H1 (cell line): ENCODE measurements at regions of chr14 and their contacts with region 1.

Region 1: GRCh38 chr14:54572316-54572715 is 5.4 kb downstream of the SAMD4A start:
- DNase-seq: no peak
- H3K4me3 ChIP-seq: no peak overlapping the region
- H3K27ac ChIP-seq: no peak overlapping the region
- H3K4me1 ChIP-seq: peaks cover 2 to 8% (median 5%) of the 10 kb centered on the region in 4 experiments; a peak in 6 of 7 replicates
- H3K27me3 ChIP-seq: peaks cover 0 to 12% (median 5%) of the 10 kb centered on the region in 4 experiments; a peak in 4 of 7 replicates
- CTCF ChIP-seq: peak; percentile 20 to 94 (median 82)
- EP300 ChIP-seq: no peak
- POLR2A ChIP-seq: no peak
- RAD21 ChIP-seq: peak; percentile 97 to 98

Region 2: GRCh38 chr14:54424479-54424901 is 147.8 kb before region 1 on chr14:
- CTCF ChIA-PET with region 1: no interaction called
- POLR2A ChIA-PET with region 1: no interaction called
- DNase-seq: no peak
- H3K4me3 ChIP-seq: no peak overlapping the region
- H3K27ac ChIP-seq: no peak overlapping the region
- H3K4me1 ChIP-seq: no peaks in the 10 kb centered on the region
- H3K27me3 ChIP-seq: no peaks in the 10 kb centered on the region
- CTCF ChIP-seq: no peak
- EP300 ChIP-seq: no peak
- POLR2A ChIP-seq: no peak
- RAD21 ChIP-seq: no peak

Region 3: GRCh38 chr14:54584097-54584496 is 11.8 kb after region 1 on chr14:
- CTCF ChIA-PET with region 1: interaction called, 23 read pairs
- POLR2A ChIA-PET with region 1: interaction called, 4 read pairs
- DNase-seq: no peak
- H3K4me3 ChIP-seq: no peak overlapping the region
- H3K27ac ChIP-seq: no peak overlapping the region
- H3K4me1 ChIP-seq: no peaks in the 10 kb centered on the region
- H3K27me3 ChIP-seq: no peaks in the 10 kb centered on the region
- CTCF ChIP-seq: no peak
- EP300 ChIP-seq: no peak
- POLR2A ChIP-seq: no peak
- RAD21 ChIP-seq: no peak

Region 4: DNA sequence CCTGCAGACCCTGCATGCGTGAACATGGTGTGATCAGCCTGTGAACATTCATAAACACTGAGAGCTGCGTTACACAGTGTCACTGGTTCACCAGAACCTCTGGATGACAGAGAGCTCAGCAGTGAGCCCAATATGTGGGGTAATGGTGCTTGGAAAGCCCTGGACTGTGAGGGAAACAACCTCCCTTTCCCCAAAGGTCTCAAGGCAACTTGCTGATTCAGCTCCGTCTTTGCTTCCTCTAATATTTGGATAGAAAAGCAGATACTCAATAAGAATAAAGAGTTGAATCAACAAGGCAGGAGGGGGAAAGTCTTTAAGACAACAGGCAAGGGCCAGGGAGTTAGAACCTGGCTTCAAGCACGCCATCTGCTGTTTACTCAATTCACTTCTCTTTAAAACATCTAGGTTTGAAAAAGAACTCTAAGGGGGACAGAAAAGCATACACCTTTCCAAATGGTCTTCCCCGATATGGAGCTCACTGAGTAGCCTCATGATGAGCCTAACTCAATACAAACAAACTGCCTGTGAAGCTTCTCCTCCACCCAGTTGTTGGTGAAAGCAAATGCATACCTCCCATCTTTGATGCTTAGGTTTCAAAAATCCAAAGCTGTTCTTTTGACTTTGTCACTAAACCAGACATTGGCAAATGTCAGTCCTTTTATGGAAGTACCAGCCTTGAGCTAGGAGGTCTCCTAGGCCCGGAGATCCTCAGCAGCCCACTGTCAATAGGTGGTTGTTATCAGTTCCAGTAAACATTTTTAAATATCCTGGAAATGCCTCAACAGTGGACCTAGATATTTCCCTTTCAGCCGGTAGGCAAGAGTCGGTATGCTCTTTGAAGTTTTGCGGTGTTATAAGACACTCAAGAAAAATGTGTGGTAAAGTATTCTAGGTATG is 70.7 kb after region 1 on chr14:
- CTCF ChIA-PET with region 1: interaction called, 27 read pairs
- POLR2A ChIA-PET with region 1: interaction called, 5 read pairs
- DNase-seq: peak in 1 of 2 experiments; percentile 44
- H3K4me3 ChIP-seq: no peak overlapping the region
- H3K27ac ChIP-seq: no peak overlapping the region
- H3K4me1 ChIP-seq: peaks cover 0 to 9% (median 6%) of the 10 kb centered on the region in 4 experiments; a peak in 3 of 7 replicates
- H3K27me3 ChIP-seq: no peaks in the 10 kb centered on the region
- CTCF ChIP-seq: peak in 2 of 3 experiments; percentile 20 to 46; a peak in 2 of 4 replicates
- EP300 ChIP-seq: no peak
- POLR2A ChIP-seq: no peak
- RAD21 ChIP-seq: peak; percentile 53 to 54

Region 5: DNA sequence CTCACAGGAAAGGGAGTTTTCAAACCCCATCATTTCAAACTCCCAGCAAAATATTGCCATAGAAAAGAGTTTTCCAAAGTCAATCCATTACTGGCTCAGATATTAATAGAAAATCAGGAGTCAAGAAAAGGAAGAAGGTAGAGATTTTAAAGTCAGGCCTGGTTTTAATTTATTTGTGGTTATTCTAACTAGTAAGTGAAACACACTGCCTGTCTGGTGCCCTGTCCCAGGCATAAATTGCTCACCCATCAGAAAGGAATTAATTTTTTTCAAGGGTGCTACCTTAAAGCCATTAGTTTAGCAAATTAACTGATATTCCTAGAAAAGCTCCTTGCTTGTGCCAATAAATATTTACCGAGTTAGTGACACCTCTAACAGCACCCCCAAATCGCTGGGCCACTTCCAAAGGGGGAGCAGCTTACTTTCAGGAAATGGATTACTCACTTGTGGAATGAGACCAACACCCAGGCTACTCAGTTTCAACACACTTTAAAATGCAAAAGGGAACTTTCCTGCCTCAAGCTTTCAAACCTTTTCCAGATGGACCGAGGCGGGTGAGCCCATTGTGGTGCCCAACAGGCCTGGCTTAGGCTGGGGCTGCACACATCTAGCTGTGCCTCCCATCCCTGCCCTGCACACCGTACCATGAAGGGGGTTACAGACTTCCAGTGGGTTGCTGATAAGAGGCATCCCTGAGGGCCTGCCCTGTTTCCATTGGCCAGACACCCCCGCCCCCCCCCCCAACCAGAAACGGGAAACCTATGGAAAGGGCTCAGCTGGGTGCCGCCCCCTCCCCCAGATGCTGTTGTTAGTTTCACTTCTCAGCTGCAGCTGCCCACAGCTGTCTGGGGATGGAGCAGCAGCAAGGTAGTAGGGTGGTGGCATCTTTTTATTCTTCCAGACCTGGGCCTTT is 111.8 kb after region 1 on chr14:
- CTCF ChIA-PET with region 1: interaction called, 108 read pairs
- POLR2A ChIA-PET with region 1: interaction called, 16 read pairs
- DNase-seq: peak; percentile 23 to 76
- H3K4me3 ChIP-seq: peak overlapping the region in 2 of 4 experiments; percentile 15 to 31; a peak in 4 of 8 replicates
- H3K27ac ChIP-seq: peak overlapping the region; percentile 32; the same call in 1 of the 2 replicates
- H3K4me1 ChIP-seq: peaks cover 6 to 11% (median 8%) of the 10 kb centered on the region in 4 experiments
- H3K27me3 ChIP-seq: no peaks in the 10 kb centered on the region
- CTCF ChIP-seq: no peak
- EP300 ChIP-seq: peak; percentile 20 to 72; a peak in 2 of 3 replicates
- POLR2A ChIP-seq: no peak
- RAD21 ChIP-seq: no peak

Region 6: GRCh38 chr14:54722781-54723432 is 150.6 kb after region 1 on chr14:
- CTCF ChIA-PET with region 1: interaction called, 46 read pairs
- POLR2A ChIA-PET with region 1: interaction called, 3 read pairs
- DNase-seq: no peak
- H3K4me3 ChIP-seq: no peak overlapping the region
- H3K27ac ChIP-seq: no peak overlapping the region
- H3K4me1 ChIP-seq: peaks cover 0 to 5% (median 3%) of the 10 kb centered on the region in 4 experiments; a peak in 2 of 7 replicates
- H3K27me3 ChIP-seq: peaks cover 0 to 1% (median 0%) of the 10 kb centered on the region in 4 experiments; a peak in 1 of 7 replicates
- CTCF ChIP-seq: peak in 2 of 3 experiments; percentile 49 to 50; a peak in 3 of 4 replicates
- EP300 ChIP-seq: no peak
- POLR2A ChIP-seq: no peak
- RAD21 ChIP-seq: peak; percentile 62 to 65